ENCODE measurements at regions of chr12 and their contacts with region 1.

Region 1: DNA sequence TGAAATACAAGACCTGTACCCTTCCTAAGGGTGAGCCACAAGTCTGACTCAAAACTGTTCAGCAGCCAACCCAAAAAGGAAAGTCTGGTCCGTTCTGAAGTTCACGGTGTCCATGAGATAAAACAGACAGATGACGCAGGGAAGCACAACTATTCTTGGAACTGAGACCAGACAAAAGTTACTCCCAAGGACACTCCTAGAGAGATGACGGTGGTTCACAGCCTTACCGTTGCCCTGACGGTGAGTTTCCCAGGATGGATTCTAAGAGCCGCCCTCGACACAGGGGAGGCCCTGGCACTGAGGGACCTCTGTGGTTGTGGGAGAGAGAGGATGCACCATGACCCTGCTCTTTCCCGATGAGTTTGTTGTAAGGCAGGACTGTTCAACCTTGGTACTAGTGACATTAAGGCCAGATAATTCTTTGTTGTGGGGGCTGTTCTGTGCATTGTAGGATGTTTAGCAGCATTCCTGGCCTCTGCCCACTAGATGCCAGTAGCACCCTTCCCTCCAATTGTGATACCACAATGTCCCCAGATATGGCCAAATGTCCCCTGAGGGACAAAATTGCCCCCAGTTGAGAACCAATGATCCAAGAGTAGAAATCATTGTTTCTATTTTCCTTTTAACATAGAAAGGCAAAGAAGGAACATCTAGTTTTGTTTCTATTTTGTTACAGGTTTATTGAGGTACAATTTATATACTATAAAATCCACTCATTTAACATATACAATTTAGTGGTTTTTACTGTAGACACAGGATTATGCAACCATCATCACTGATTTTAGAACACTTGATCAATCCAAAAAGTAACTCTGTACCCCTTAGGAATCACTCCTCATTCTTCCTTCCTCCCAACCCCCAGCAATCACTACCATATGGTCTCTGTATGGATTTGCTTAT is 23.0 kb downstream of the OR10P1 start:
- DNase-seq: no peak
- H3K4me3 ChIP-seq: no peak overlapping the region
- H3K4me3 Mint-ChIP-seq: no peak overlapping the region
- H3K27ac ChIP-seq: no peak overlapping the region
- H3K27ac Mint-ChIP-seq: peak overlapping the region in 1 of 7 donors; percentile 25
- H3K4me1 ChIP-seq: no peaks in the 10 kb centered on the region
- H3K4me1 Mint-ChIP-seq: peaks cover 0 to 2% (median under 1%) of the 10 kb centered on the region in 4 donors
- H3K27me3 ChIP-seq: no peaks in the 10 kb centered on the region
- H3K27me3 Mint-ChIP-seq: peaks cover 3 to 4% of the 10 kb centered on the region in 2 donors

Region 2: DNA sequence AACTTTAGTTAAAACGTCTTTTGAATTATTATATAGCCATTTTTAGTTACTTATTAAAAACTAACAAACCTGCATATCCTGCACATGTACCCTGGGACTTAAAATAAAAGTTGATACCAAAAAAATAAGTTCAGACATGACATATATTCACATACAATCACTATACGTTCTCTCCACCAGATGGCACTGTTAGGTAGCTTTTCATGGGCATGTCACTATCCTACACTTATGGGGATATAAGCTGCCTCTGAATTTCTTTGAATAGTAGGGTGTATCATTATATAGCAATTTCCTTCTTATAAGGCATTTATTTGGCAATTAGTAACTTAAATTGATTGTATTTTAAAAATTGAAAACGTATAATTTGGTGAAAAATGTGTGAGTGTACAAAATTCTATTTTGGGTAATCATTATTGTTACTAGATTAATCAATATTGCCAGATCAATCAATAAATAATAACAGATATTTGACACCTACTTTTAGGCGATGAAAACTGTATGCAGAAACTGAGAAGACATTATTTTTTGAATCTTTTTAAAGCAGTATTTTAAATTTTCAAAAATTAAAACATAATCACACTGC is 470.7 kb before region 1 on chr12:
- CTCF ChIA-PET with region 1: interaction called, 14 read pairs
- POLR2A ChIA-PET with region 1: no interaction called
- intact Hi-C with region 1: loop called (anchors 1 kb)
- DNase-seq: peak; percentile 51 to 63 (median 55)
- H3K4me3 ChIP-seq: no peak overlapping the region
- H3K4me3 Mint-ChIP-seq: no peak overlapping the region
- H3K27ac ChIP-seq: no peak overlapping the region
- H3K27ac Mint-ChIP-seq: no peak overlapping the region
- H3K4me1 ChIP-seq: no peaks in the 10 kb centered on the region
- H3K4me1 Mint-ChIP-seq: no peaks in the 10 kb centered on the region
- H3K27me3 ChIP-seq: peaks cover 6% of the 10 kb centered on the region
- H3K27me3 Mint-ChIP-seq: peaks cover 15 to 26% of the 10 kb centered on the region in 2 donors

Region 3: DNA sequence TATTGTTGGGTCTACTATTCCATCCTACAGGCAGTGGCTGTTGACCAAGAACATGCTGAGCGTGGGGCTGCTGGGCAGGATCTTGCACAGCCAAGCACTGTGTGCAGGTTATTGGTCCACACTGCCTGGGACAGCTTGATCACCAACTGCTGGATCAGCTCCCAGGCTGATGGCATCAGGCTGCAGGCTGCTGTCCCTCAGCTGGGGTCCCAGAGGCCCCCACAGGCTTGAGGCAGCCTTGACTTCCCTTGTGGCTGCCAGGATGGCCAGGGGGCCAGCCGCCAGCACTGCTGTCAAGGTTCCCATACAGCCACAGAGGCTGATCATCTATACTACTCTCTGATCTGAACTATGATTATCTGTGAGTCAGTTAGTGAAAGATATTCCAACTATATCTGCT is 77.7 kb before region 1 on chr12:
- CTCF ChIA-PET with region 1: no interaction called
- POLR2A ChIA-PET with region 1: no interaction called
- intact Hi-C with region 1: no loop called
- DNase-seq: no peak
- H3K4me3 ChIP-seq: no peak overlapping the region
- H3K4me3 Mint-ChIP-seq: no peak overlapping the region
- H3K27ac ChIP-seq: no peak overlapping the region
- H3K27ac Mint-ChIP-seq: no peak overlapping the region
- H3K4me1 ChIP-seq: no peaks in the 10 kb centered on the region
- H3K4me1 Mint-ChIP-seq: no peaks in the 10 kb centered on the region
- H3K27me3 ChIP-seq: peaks cover 6% of the 10 kb centered on the region
- H3K27me3 Mint-ChIP-seq: peaks cover 18 to 34% of the 10 kb centered on the region in 2 donors

Region 4: GRCh38 chr12:55619354-55620138 is 40.2 kb before region 1 on chr12:
- CTCF ChIA-PET with region 1: interaction called, 7 read pairs
- POLR2A ChIA-PET with region 1: no interaction called
- intact Hi-C with region 1: loop called (anchors 2 kb)
- DNase-seq: peak; percentile 56 to 70 (median 67)
- H3K4me3 ChIP-seq: no peak overlapping the region
- H3K4me3 Mint-ChIP-seq: peak overlapping the region in 1 of 8 donors; percentile 38
- H3K27ac ChIP-seq: no peak overlapping the region
- H3K27ac Mint-ChIP-seq: no peak overlapping the region
- H3K4me1 ChIP-seq: no peaks in the 10 kb centered on the region
- H3K4me1 Mint-ChIP-seq: peaks cover 0 to 5% (median 2%) of the 10 kb centered on the region in 4 donors
- H3K27me3 ChIP-seq: no peaks in the 10 kb centered on the region
- H3K27me3 Mint-ChIP-seq: peaks cover 24 to 25% of the 10 kb centered on the region in 2 donors

Region 5: GRCh38 chr12:55629058-55629841 is 30.5 kb before region 1 on chr12:
- CTCF ChIA-PET with region 1: interaction called, 14 read pairs
- POLR2A ChIA-PET with region 1: no interaction called
- intact Hi-C with region 1: no loop called
- DNase-seq: no peak
- H3K4me3 ChIP-seq: no peak overlapping the region
- H3K4me3 Mint-ChIP-seq: no peak overlapping the region
- H3K27ac ChIP-seq: no peak overlapping the region
- H3K27ac Mint-ChIP-seq: peak overlapping the region in 1 of 7 donors; percentile 26
- H3K4me1 ChIP-seq: no peaks in the 10 kb centered on the region
- H3K4me1 Mint-ChIP-seq: peaks cover 0 to 9% (median 3%) of the 10 kb centered on the region in 4 donors
- H3K27me3 ChIP-seq: no peaks in the 10 kb centered on the region
- H3K27me3 Mint-ChIP-seq: peaks cover 8 to 9% of the 10 kb centered on the region in 2 donors

Region 6: GRCh38 chr12:55642669-55643068 is 17.1 kb before region 1 on chr12:
- CTCF ChIA-PET with region 1: interaction called, 137 read pairs
- POLR2A ChIA-PET with region 1: interaction called, 7 read pairs
- intact Hi-C with region 1: loop called (anchors 1 kb)
- DNase-seq: no peak
- H3K4me3 ChIP-seq: no peak overlapping the region
- H3K4me3 Mint-ChIP-seq: peak overlapping the region in 1 of 8 donors; percentile 37
- H3K27ac ChIP-seq: no peak overlapping the region
- H3K27ac Mint-ChIP-seq: peak overlapping the region in 3 of 7 donors; percentile 50 to 83 (median 57)
- H3K4me1 ChIP-seq: peaks cover 21% of the 10 kb centered on the region
- H3K4me1 Mint-ChIP-seq: peaks cover 14 to 31% (median 22%) of the 10 kb centered on the region in 4 donors
- H3K27me3 ChIP-seq: no peaks in the 10 kb centered on the region
- H3K27me3 Mint-ChIP-seq: peaks cover 0 to 4% of the 10 kb centered on the region in 2 donors

Measured in CD4-positive, alpha-beta memory T cell (primary cell).